Common myeloid progenitor, CD34-positive (primary cell): ENCODE measurements at regions of chr10 and their contacts with region 1.

Region 1: DNA sequence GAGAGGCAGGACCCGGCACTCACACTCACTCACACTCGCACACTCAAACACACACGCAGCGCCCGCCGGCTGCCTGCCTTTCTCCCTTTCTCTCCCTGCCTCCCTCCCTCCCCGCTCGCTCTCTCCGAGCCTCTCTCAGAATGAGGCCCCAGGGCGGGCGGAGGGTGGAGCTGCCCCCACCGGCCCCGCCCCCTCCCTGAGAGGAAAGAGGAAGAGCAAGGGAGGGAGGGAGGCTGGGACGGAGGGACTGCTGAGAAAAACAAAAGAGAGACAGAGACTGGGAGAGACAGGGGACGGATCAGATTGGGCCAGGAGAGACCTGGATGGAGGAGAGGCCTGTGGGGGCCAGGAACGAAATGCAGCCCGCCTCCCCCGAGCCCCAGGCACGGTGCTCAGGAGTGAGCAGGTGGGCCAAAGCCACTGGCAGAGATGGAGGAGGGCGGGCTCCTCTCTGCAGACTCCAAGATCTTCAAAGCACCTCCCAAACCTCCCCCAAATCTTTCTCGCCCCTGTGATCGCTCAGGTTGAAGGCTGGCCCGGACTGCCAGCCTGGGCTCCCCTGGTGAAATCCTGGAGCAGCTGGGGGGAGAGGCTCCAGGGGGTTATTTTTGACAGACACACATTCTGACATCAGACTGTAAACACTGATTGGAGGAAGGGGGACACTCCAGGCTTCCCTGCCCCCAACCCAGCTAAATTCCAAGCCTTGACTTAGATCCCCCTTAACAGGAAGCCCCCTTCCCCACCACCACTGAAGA is 5.1 kb downstream of the LDB1 start:
- DNase-seq: peak; percentile 73 to 87 (median 84)
- H3K4me3 ChIP-seq: peak overlapping the region; percentile 48 to 92 (median 73)
- H3K27ac ChIP-seq: peak overlapping the region; percentile 41 to 89
- H3K4me1 ChIP-seq: peaks cover 22 to 71% (median 66%) of the 10 kb centered on the region in 4 experiments
- H3K27me3 ChIP-seq: no peaks in the 10 kb centered on the region

Region 2: GRCh38 chr10:102072673-102073527 is 42.1 kb before region 1 on chr10:
- CTCF ChIA-PET with region 1: interaction called, 24 read pairs
- POLR2A ChIA-PET with region 1: interaction called, 3 read pairs
- DNase-seq: peak; percentile 79 to 90 (median 83)
- H3K4me3 ChIP-seq: no peak overlapping the region
- H3K27ac ChIP-seq: no peak overlapping the region
- H3K4me1 ChIP-seq: peaks cover 3 to 15% (median 5%) of the 10 kb centered on the region in 4 experiments
- H3K27me3 ChIP-seq: no peaks in the 10 kb centered on the region

Region 3: GRCh38 chr10:102090772-102091171 is 24.3 kb before region 1 on chr10:
- CTCF ChIA-PET with region 1: interaction called, 15 read pairs
- POLR2A ChIA-PET with region 1: interaction called, 4 read pairs
- DNase-seq: no peak
- H3K4me3 ChIP-seq: no peak overlapping the region
- H3K27ac ChIP-seq: no peak overlapping the region
- H3K4me1 ChIP-seq: no peaks in the 10 kb centered on the region
- H3K27me3 ChIP-seq: no peaks in the 10 kb centered on the region

Region 4: GRCh38 chr10:102101152-102101551 is 13.9 kb before region 1 on chr10:
- CTCF ChIA-PET with region 1: interaction called, 22 read pairs
- POLR2A ChIA-PET with region 1: no interaction called
- DNase-seq: no peak
- H3K4me3 ChIP-seq: no peak overlapping the region
- H3K27ac ChIP-seq: no peak overlapping the region
- H3K4me1 ChIP-seq: peaks cover 5 to 18% (median 14%) of the 10 kb centered on the region in 4 experiments
- H3K27me3 ChIP-seq: no peaks in the 10 kb centered on the region